A549 (cell line): ENCODE measurements at regions of chr9 and their contacts with region 1.

Region 1: GRCh38 chr9:33264473-33265177 is at the starts of genes BAG1 and CHMP5:
- DNase-seq: peak; percentile 99
- ATAC-seq: peak; percentile 93 to 95
- H3K4me3 ChIP-seq: peak within 1 kb of the TSS; percentile 90
- H3K27ac ChIP-seq: peak within 1 kb of the TSS; percentile 94 to 96
- H3K4me1 ChIP-seq: peaks cover 36% of the 10 kb centered on the region
- CTCF ChIP-seq: no peak
- EP300 ChIP-seq: no peak
- POLR2A ChIP-seq: peak; percentile 77
- RAD21 ChIP-seq: peak in 1 of 2 experiments; percentile 52; a peak in 3 of 5 replicates
- polyA plus RNA-seq, gene BAG1: 51.9 and 86.9 TPM in 2 replicates
- polyA plus RNA-seq, gene CHMP5: 108 and 187 TPM in 2 replicates

Region 2: GRCh38 chr9:33139421-33140228 is 125.0 kb before region 1 on chr9:
- CTCF ChIA-PET with region 1: no interaction called
- POLR2A ChIA-PET with region 1: no interaction called
- DNase-seq: no peak
- ATAC-seq: peak in 1 of 2 experiments; percentile 8; a peak in 2 of 6 replicates
- H3K4me3 ChIP-seq: no peak overlapping the region
- H3K27ac ChIP-seq: peak overlapping the region in 1 of 2 experiments; percentile 44; a peak in 3 of 6 replicates
- H3K4me1 ChIP-seq: peaks cover 89% of the 10 kb centered on the region
- CTCF ChIP-seq: no peak
- EP300 ChIP-seq: no peak
- POLR2A ChIP-seq: no peak
- RAD21 ChIP-seq: no peak

Region 3: DNA sequence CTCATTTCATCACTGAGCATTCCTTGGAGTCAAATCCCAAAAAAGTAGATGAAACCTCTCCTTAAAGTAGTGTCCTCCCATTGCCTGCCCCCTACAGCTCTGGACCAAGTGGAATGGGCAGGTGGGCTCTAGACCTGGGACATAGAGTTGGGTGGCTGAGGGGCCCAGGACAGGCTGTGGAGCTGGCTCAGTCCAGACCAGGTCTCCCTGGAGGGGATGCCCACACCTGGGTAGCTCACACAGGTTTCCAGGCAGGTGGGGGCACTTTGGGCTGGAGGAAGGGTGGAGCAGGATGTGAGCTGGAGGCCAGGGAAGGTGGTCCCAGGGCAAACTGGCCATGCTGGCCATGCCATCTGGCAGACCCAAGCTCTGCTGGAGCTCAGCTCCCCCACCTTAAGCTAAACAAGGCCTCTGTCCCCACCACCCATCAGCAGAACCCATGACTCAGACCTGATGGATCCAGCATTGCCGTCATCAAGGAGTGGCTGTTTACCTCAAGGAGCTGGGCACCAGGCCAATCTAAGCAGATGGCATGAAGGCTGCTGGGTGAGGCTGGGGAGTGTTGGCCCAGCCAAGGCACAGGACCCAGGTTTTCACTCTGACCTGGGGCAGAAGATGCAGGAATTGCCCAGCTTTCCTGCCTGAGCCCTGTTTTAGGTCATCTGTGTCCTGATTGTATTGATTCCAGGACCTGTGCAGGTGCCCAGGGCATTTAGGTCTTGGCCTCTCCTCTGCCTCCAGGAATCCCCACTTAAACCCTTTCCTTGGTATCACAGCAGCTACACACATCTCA is 30.7 kb before region 1 on chr9:
- CTCF ChIA-PET with region 1: interaction called, 6 read pairs
- POLR2A ChIA-PET with region 1: interaction called, 11 read pairs
- DNase-seq: peak; percentile 97 to 100
- ATAC-seq: peak; percentile 86
- H3K4me3 ChIP-seq: no peak overlapping the region
- H3K27ac ChIP-seq: peak overlapping the region; percentile 96 to 99
- H3K4me1 ChIP-seq: peaks cover 61% of the 10 kb centered on the region
- CTCF ChIP-seq: no peak
- EP300 ChIP-seq: peak; percentile 92 to 95; a peak in 4 of 5 replicates
- POLR2A ChIP-seq: peak; percentile 37; the same call in 1 of the 2 replicates
- RAD21 ChIP-seq: peak; percentile 32 to 53; a peak in 4 of 5 replicates

Region 4: DNA sequence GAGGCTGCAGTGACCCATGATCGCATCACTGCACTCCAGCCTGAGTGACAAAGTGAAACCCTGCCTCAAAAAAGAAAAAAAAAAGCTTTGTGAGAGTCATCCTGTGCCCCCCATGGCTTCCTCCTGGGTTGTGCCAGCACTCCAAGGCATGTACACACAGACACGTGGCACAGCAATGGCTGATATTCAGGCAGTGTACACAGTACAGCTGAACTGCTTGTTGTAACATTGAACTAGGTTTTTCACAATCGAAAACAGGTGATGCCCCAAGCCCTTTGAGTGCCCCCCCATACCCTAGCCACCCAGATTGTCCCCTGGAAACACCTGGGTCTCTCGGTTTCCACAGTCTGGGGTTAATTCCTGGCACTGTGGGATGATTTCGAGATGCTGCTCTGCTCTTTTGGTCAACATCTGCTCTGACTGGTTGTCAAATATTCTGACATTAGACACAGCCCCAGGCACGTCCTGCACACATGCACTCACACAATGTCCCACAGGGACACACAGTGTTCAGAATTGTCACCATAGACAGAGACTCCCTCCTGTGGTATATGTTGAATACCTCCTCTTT is 15.5 kb before region 1 on chr9:
- CTCF ChIA-PET with region 1: interaction called, 16 read pairs
- POLR2A ChIA-PET with region 1: no interaction called
- DNase-seq: no peak
- ATAC-seq: peak; percentile 32 to 39; a peak in 3 of 6 replicates
- H3K4me3 ChIP-seq: no peak overlapping the region
- H3K27ac ChIP-seq: peak overlapping the region in 1 of 2 experiments; percentile 26; a peak in 3 of 6 replicates
- H3K4me1 ChIP-seq: peaks cover 20% of the 10 kb centered on the region; the same call in 2 of the 3 replicates
- CTCF ChIP-seq: no peak
- EP300 ChIP-seq: no peak
- POLR2A ChIP-seq: no peak
- RAD21 ChIP-seq: no peak